Mammary epithelial cell (primary cell): ENCODE measurements at regions of chr1 and their contacts with region 1.

Region 1: DNA sequence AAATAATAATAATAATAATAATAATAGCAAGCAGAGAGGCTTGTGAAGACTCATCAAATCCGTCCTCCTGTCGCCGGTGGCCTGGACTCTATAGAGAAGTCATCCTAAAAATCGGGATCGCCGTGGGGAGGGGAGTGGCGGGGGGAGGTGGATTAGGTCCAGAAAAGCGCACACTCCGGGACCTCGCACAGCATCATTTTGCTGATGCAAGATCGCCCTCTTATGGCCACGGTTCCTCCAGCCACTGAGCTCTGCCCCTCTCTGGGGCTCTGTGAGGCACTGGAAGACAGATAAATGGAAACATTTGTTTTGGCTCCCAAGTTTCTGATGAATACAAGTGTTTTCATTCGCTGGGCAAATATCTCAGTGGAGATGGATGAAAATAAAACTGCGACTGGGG is 612.0 kb downstream of the MATN1 start:
- DNase-seq: peak; percentile 16
- H3K4me3 ChIP-seq: no peak overlapping the region
- H3K27ac ChIP-seq: no peak overlapping the region
- H3K4me1 ChIP-seq: no peaks in the 10 kb centered on the region
- H3K27me3 ChIP-seq: no peaks in the 10 kb centered on the region
- CTCF ChIP-seq: peak; percentile 43 to 69

Region 2: DNA sequence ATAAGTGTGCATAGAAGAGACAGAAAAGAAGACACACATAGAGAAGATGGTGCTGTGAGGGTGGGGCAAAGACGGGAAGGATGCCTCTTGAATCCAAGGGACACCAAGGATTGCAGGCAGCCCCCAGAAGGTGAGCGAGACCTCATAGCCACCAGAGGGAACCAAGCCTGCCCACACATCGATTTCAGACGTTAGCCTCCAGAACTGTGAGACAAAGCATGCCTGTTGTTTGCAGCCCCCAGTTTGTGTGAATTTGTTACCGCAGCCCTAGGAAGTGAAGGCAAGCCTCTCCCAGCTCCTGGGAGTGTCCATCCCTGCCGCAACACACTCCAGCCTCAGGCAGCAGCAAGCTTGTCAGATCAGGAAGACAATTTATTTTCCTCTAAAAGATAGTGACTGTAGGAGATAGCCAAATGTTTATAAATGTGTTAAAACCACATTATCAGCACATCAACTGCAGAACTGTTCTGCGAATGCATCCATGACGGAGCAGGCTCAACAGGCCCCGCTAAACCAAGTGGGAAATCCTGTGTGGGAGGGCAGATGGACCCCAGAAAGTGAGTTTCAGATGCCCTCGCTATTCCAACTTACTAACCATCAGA is 68.6 kb after region 1 on chr1:
- CTCF ChIA-PET with region 1: no interaction called
- dilution Hi-C with region 1: no loop called
- in situ Hi-C with region 1: no loop called
- intact Hi-C with region 1: no loop called
- DNase-seq: no peak
- H3K4me3 ChIP-seq: no peak overlapping the region
- H3K27ac ChIP-seq: no peak overlapping the region
- H3K4me1 ChIP-seq: no peaks in the 10 kb centered on the region
- H3K27me3 ChIP-seq: no peaks in the 10 kb centered on the region
- CTCF ChIP-seq: no peak

Region 3: DNA sequence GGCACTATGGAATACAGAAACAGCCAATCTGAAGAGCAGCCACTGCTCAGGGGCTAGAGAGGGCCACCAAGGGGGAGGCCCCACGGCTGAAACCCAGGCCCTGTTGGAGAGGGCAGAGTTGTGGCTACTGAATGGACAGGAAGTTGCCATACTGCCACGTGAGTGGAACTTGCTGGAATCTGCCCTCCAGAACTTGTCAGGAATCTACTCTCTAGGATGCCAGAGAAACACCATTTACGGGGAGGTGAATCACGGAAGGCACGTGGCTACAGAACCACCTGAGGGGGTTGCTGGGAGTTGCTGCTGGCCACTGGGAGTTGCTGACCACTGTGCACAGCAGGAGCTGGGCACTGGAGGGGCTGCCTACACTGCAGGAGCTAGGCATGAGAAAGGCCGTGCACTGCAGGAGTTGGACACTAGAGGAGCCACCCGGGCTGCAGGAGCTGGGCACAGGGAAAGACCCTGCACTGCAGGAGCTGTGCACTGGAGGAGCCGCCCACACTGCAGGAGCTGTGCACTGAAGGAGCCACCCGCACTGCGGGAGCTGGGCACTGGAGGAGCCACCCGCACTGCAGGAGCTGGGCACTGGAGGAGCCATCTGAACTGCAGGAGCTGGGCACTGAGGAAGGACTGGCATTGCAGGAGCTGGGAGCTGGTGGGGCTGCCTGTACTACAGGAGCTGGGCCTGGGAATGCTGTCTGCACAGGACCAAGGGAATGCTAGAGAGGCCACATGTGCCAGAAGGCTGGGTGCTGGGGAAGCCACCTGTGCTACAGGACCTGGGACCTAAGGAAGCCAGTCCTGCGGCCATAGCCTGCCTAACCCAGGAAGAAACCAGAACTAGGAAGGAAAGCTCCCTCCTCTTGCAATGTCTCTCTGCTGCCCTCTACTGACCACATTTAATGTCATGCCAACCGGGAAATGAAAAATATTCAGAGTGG is 268.5 kb after region 1 on chr1:
- CTCF ChIA-PET with region 1: no interaction called
- dilution Hi-C with region 1: no loop called
- in situ Hi-C with region 1: no loop called
- intact Hi-C with region 1: loop called (anchors 10 kb)
- DNase-seq: peak; percentile 68
- H3K4me3 ChIP-seq: no peak overlapping the region
- H3K27ac ChIP-seq: no peak overlapping the region
- H3K4me1 ChIP-seq: peaks cover 23% of the 10 kb centered on the region
- H3K27me3 ChIP-seq: no peaks in the 10 kb centered on the region
- CTCF ChIP-seq: peak; percentile 89 to 93